Activated CD8-positive, alpha-beta memory T cell treated with anti-CD3 and anti-CD28 coated beads, Interleukin-2, amount 10 ng/mL, durations not matched to agents 7 days and 5 days (primary cell): ENCODE measurements at regions of chr9 and their contacts with region 1.

Region 1: GRCh38 chr9:97237951-97238851 is 69.3 kb upstream of the CCDC180 start:
- DNase-seq: peak; percentile 92
- ATAC-seq: peak; percentile 94
- H3K4me3 Mint-ChIP-seq: peak overlapping the region; percentile 88
- H3K27ac Mint-ChIP-seq: peak overlapping the region; percentile 92
- H3K4me1 Mint-ChIP-seq: peaks cover 19% of the 10 kb centered on the region
- H3K27me3 Mint-ChIP-seq: no peaks in the 10 kb centered on the region

Region 2: GRCh38 chr9:96854073-96854876 is 383.9 kb before region 1 on chr9 and contains the start of gene ZNF782:
- CTCF ChIA-PET with region 1: interaction called, 13 read pairs
- DNase-seq: peak; percentile 92
- ATAC-seq: peak; percentile 96
- H3K4me3 Mint-ChIP-seq: peak within 1 kb of the TSS; percentile 98
- H3K27ac Mint-ChIP-seq: peak within 1 kb of the TSS; percentile 97
- H3K4me1 Mint-ChIP-seq: peaks cover 31% of the 10 kb centered on the region
- H3K27me3 Mint-ChIP-seq: peaks cover 23% of the 10 kb centered on the region
- total RNA-seq, gene ZNF782: 4.9 to 5.0 TPM

Region 3: GRCh38 chr9:97220894-97221477 is 17.2 kb before region 1 on chr9:
- CTCF ChIA-PET with region 1: interaction called, 11 read pairs
- DNase-seq: no peak
- ATAC-seq: peak; percentile 40
- H3K4me3 Mint-ChIP-seq: peak overlapping the region; percentile 68
- H3K27ac Mint-ChIP-seq: no peak overlapping the region
- H3K4me1 Mint-ChIP-seq: peaks cover 6% of the 10 kb centered on the region
- H3K27me3 Mint-ChIP-seq: peaks cover 56% of the 10 kb centered on the region

Region 4: GRCh38 chr9:97315550-97315949 is 77.3 kb after region 1 on chr9:
- CTCF ChIA-PET with region 1: no interaction called
- DNase-seq: no peak
- ATAC-seq: no peak
- H3K4me3 Mint-ChIP-seq: no peak overlapping the region
- H3K27ac Mint-ChIP-seq: no peak overlapping the region
- H3K4me1 Mint-ChIP-seq: peaks cover 22% of the 10 kb centered on the region
- H3K27me3 Mint-ChIP-seq: no peaks in the 10 kb centered on the region